ENCODE measurements at regions of chr2 and their contacts with region 1.

Region 1: DNA sequence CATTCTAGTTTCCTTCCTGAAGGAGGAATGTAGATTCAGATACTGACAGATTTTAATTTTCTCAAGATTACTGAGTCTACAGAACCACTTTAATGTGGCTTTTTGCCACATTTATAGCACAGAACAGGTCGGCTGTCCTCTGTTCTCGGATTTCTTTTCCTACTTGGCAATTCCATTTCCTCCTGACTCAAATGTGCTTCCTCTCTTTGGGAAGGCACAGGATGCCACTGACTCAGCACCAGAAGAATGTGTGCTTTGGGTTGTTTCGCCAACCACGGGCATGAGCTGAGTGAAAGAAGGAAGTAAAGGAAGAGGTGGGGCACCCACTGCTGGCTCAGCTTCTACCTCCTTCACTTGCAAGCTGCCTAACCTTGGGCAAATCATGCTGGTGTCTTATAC is 970.6 kb upstream of the ACVR2A start:
- DNase-seq: peak; percentile 90
- H3K4me3 ChIP-seq: no peak overlapping the region
- H3K27ac ChIP-seq: peak overlapping the region; percentile 25
- H3K4me1 ChIP-seq: peaks cover 25% of the 10 kb centered on the region
- H3K27me3 ChIP-seq: no peaks in the 10 kb centered on the region
- CTCF ChIP-seq: peak in 1 of 2 donors; percentile 23

Region 2: DNA sequence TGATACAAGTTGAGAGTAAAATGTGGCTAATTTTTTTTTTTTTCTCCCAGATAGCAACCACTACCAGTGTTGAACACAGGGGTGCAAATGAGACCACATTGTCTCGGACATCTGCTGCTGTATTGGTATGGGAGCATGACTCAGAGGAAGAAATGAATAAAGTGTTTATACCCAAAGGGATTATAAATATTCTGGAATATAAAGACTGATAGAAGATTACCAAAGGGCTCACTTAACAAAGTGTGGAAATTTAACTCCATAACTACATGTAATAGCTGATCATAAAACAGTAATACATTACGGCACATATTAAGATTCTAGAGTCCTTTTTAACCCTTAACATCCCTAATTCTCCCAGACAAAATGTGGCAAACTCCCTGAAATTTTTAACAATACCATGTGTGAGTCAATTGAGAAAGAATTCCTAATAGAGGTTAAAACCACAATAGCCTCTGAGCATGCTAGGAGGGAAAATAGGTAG is 52.4 kb before region 1 on chr2:
- CTCF ChIA-PET with region 1: interaction called, 3 read pairs
- dilution Hi-C with region 1: no loop called
- in situ Hi-C with region 1: no loop called
- intact Hi-C with region 1: loop called (anchors 5 kb)
- DNase-seq: peak; percentile 61
- H3K4me3 ChIP-seq: peak overlapping the region in 1 of 3 experiments; percentile 35
- H3K27ac ChIP-seq: peak overlapping the region; percentile 59
- H3K4me1 ChIP-seq: peaks cover 30% of the 10 kb centered on the region
- H3K27me3 ChIP-seq: no peaks in the 10 kb centered on the region
- CTCF ChIP-seq: peak; percentile 14 to 30

Region 3: GRCh38 chr2:147133286-147133908 is 259.1 kb after region 1 on chr2:
- CTCF ChIA-PET with region 1: no interaction called
- dilution Hi-C with region 1: no loop called
- in situ Hi-C with region 1: no loop called
- intact Hi-C with region 1: no loop called
- DNase-seq: no peak
- H3K4me3 ChIP-seq: no peak overlapping the region
- H3K27ac ChIP-seq: no peak overlapping the region
- H3K4me1 ChIP-seq: no peaks in the 10 kb centered on the region
- H3K27me3 ChIP-seq: no peaks in the 10 kb centered on the region
- CTCF ChIP-seq: no peak

Measured in mammary epithelial cell (primary cell).